ENCODE measurements at regions of chr12 and their contacts with region 1.

Region 1: GRCh38 chr12:55642669-55643068 is 6.0 kb downstream of the OR10P1 start:
- DNase-seq: no peak
- H3K4me3 ChIP-seq: no peak overlapping the region
- H3K4me3 Mint-ChIP-seq: no peak overlapping the region
- H3K27ac ChIP-seq: no peak overlapping the region
- H3K27ac Mint-ChIP-seq: peak overlapping the region in 2 of 8 donors; percentile 9 to 13
- H3K4me1 ChIP-seq: peaks cover 12% of the 10 kb centered on the region
- H3K4me1 Mint-ChIP-seq: peaks cover 14 to 30% (median 28%) of the 10 kb centered on the region in 3 donors
- H3K27me3 ChIP-seq: no peaks in the 10 kb centered on the region
- H3K27me3 Mint-ChIP-seq: peaks cover 0 to 1% of the 10 kb centered on the region in 2 donors

Region 2: GRCh38 chr12:55619354-55620138 is 23.1 kb before region 1 on chr12:
- CTCF ChIA-PET with region 1: interaction called, 10 read pairs
- POLR2A ChIA-PET with region 1: no interaction called
- DNase-seq: peak in 4 of 5 donors; percentile 17 to 70 (median 52)
- H3K4me3 ChIP-seq: no peak overlapping the region
- H3K4me3 Mint-ChIP-seq: no peak overlapping the region
- H3K27ac ChIP-seq: no peak overlapping the region
- H3K27ac Mint-ChIP-seq: no peak overlapping the region
- H3K4me1 ChIP-seq: no peaks in the 10 kb centered on the region
- H3K4me1 Mint-ChIP-seq: peaks cover 2 to 5% (median 5%) of the 10 kb centered on the region in 3 donors
- H3K27me3 ChIP-seq: no peaks in the 10 kb centered on the region
- H3K27me3 Mint-ChIP-seq: peaks cover 16 to 40% of the 10 kb centered on the region in 2 donors

Measured in CD8-positive, alpha-beta memory T cell (primary cell).